Vagina (tissue), 2 donors: ENCODE measurements at regions of chr1 and their contacts with region 1.

Region 1: GRCh38 chr1:117523111-117523510 is 82.7 kb upstream of the TENT5C start:
- DNase-seq: no peak
- H3K4me3 ChIP-seq: no peak overlapping the region
- H3K27ac ChIP-seq: no peak overlapping the region
- H3K4me1 ChIP-seq: no peaks in the 10 kb centered on the region
- H3K27me3 ChIP-seq: no peaks in the 10 kb centered on the region
- CTCF ChIP-seq: no peak
- POLR2A ChIP-seq: no peak

Region 2: GRCh38 chr1:117493906-117494305 is 29.2 kb before region 1 on chr1:
- intact Hi-C with region 1: loop called (anchors 2 kb)
- DNase-seq: no peak
- H3K4me3 ChIP-seq: no peak overlapping the region
- H3K27ac ChIP-seq: no peak overlapping the region
- H3K4me1 ChIP-seq: no peaks in the 10 kb centered on the region
- H3K27me3 ChIP-seq: no peaks in the 10 kb centered on the region
- CTCF ChIP-seq: no peak
- POLR2A ChIP-seq: no peak

Region 3: GRCh38 chr1:117599286-117600221 is 76.4 kb after region 1 on chr1:
- intact Hi-C with region 1: no loop called
- DNase-seq: no peak
- H3K4me3 ChIP-seq: no peak overlapping the region
- H3K27ac ChIP-seq: no peak overlapping the region
- H3K4me1 ChIP-seq: no peaks in the 10 kb centered on the region
- H3K27me3 ChIP-seq: no peaks in the 10 kb centered on the region
- CTCF ChIP-seq: no peak
- POLR2A ChIP-seq: no peak

Region 4: GRCh38 chr1:117925981-117926380 is 402.9 kb after region 1 on chr1:
- intact Hi-C with region 1: no loop called
- DNase-seq: no peak
- H3K4me3 ChIP-seq: no peak overlapping the region
- H3K27ac ChIP-seq: no peak overlapping the region
- H3K4me1 ChIP-seq: peaks cover 28% of the 10 kb centered on the region
- H3K27me3 ChIP-seq: no peaks in the 10 kb centered on the region
- CTCF ChIP-seq: no peak
- POLR2A ChIP-seq: no peak

Region 5: DNA sequence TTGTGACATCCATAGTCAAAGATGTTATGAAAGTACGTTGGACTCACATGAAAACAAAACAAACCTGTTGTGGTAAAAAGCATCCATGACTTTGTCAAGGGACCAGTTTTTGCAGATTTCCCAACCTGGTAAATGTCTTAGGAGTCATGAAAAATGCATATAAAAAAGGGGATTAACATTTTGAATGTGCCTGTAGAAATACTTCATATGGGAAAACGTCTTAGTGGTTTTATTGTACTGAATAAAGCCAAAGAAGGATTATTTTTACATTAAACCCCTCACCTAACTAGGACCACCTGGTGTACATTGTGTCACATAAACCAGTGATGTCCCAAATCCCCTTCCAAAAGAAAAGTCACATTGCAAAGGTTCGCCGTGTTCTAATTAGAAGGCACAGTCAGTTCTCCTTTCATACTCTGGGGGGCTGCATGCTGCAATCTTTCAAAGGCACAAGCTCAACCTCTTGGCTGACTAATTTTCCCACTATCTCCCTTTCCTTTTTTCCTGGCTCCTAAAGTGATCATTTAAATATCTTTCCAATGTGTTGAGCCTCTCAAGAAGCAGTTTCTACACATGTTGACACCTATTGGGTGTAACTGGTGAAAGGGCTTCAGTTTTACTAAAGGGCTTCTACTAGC is 781.7 kb after region 1 on chr1:
- intact Hi-C with region 1: no loop called
- DNase-seq: no peak
- H3K4me3 ChIP-seq: no peak overlapping the region
- H3K27ac ChIP-seq: no peak overlapping the region
- H3K4me1 ChIP-seq: peaks cover 9% of the 10 kb centered on the region
- H3K27me3 ChIP-seq: no peaks in the 10 kb centered on the region
- CTCF ChIP-seq: no peak
- POLR2A ChIP-seq: no peak